ENCODE measurements at regions of chr11 and their contacts with region 1.

Region 1: DNA sequence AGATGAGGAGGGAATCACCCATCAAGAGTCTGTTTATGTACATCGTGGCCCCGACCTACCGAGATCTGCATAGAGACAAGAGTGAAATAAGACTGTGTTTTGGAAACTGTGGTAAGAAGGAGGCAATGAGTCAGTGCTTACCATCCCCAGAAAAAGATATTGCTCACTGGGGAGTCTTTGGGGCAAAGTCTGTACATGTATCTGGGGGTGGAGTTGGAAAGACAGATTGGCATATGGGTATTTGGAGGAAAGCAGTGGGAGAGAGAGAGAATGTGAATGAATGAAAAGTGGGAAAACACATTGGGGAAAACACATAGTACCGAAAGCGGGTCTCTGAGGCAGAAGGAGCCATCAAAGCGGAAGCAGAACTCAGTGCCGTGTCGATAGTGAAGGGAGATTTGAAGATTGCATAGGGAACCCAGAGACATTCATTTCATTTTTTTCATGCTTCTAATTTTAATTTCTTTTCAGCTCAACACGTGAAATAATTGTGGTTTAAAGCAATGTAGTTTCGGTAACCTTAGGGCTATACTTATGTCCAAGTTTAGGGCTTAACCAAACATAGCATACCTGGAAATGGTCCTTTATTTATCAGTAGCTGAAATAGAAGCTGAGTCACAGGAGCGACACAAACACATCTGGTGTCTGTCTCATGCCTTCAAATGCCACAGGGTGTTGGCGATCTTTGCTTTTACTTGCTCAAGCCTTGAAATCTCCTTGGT is 98.6 kb upstream of the CD44 start:
- DNase-seq: peak; percentile 37 to 92 (median 57)
- ATAC-seq: peak; percentile 79
- H3K4me3 ChIP-seq: peak overlapping the region; percentile 55
- H3K4me3 Mint-ChIP-seq: peak overlapping the region; percentile 81
- H3K27ac ChIP-seq: peak overlapping the region; percentile 84 to 88
- H3K27ac Mint-ChIP-seq: peak overlapping the region; percentile 92
- H3K4me1 ChIP-seq: peaks cover 43% of the 10 kb centered on the region
- H3K4me1 Mint-ChIP-seq: peaks cover 72% of the 10 kb centered on the region
- H3K27me3 ChIP-seq: no peaks in the 10 kb centered on the region
- H3K27me3 Mint-ChIP-seq: no peaks in the 10 kb centered on the region
- CTCF ChIP-seq: no peak

Region 2: DNA sequence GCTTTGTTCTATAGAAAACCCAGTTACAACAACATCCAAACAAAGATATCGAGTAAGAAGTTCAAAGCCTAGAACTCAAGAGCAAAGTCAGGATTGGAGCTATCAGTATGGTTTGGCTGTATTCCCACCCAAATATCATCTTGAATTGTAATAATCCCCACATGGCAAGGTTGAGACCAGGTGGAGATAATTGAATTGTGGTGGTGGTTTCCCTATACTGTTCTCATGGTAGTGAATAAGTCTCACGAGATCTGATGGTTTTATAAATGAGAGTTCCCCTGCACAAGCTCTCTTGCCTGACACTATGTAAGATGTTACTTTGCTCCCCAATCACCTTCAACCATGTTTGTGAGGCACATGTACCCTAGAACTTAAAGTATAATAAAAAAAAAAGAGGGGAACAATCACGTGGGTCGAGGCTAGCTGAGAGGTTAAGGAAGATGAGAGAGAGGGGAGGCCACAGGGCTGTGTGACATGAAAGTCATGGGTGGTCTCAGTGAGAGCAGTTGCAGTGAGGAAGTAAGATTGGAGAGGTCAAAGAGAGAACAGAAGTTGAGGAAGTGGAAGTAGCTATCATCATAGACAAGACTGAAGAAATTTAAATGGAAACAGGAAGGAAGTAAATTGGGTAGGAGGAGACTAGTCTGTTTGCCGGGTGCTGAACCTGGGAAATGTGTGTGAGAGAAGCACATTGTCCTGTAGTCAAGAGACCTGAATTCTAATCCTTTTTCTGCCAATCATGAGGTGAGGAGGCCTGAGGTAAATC is 18.5 kb after region 1 on chr11:
- CTCF ChIA-PET with region 1: no interaction called
- POLR2A ChIA-PET with region 1: interaction called, 12 read pairs
- intact Hi-C with region 1: no loop called
- DNase-seq: peak in 1 of 14 experiments; percentile 47
- ATAC-seq: peak; percentile 39
- H3K4me3 ChIP-seq: no peak overlapping the region
- H3K4me3 Mint-ChIP-seq: no peak overlapping the region
- H3K27ac ChIP-seq: peak overlapping the region in 1 of 2 donors; percentile 17
- H3K27ac Mint-ChIP-seq: peak overlapping the region; percentile 76
- H3K4me1 ChIP-seq: peaks cover 26% of the 10 kb centered on the region
- H3K4me1 Mint-ChIP-seq: peaks cover 53% of the 10 kb centered on the region
- H3K27me3 ChIP-seq: no peaks in the 10 kb centered on the region
- H3K27me3 Mint-ChIP-seq: no peaks in the 10 kb centered on the region
- CTCF ChIP-seq: no peak

Region 3: DNA sequence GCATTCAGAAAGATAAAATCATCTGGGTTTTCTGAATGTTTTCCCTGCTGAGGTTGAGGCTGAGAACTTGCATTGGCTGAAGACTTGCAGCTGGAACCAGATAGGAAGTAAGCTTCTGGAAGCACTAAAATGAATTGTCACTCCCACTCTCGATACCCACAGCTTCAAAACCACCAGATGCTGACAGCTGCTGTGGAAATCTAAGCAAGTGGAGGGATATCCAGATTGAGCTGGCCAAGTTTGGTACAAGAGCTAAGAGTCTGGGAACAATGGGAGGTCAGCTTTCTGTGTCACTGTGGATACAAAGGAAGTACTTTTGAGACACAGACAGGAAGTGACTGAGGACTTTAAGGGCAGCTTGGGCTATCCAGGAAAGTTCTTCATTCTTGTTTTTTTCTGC is 47.3 kb after region 1 on chr11:
- CTCF ChIA-PET with region 1: no interaction called
- POLR2A ChIA-PET with region 1: interaction called, 5 read pairs
- intact Hi-C with region 1: loop called (anchors 1 to 5 kb)
- DNase-seq: peak in 3 of 14 experiments; percentile 27 to 53 (median 50)
- ATAC-seq: no peak
- H3K4me3 ChIP-seq: no peak overlapping the region
- H3K4me3 Mint-ChIP-seq: no peak overlapping the region
- H3K27ac ChIP-seq: no peak overlapping the region
- H3K27ac Mint-ChIP-seq: peak overlapping the region; percentile 69
- H3K4me1 ChIP-seq: peaks cover 60% of the 10 kb centered on the region
- H3K4me1 Mint-ChIP-seq: peaks cover 91% of the 10 kb centered on the region
- H3K27me3 ChIP-seq: no peaks in the 10 kb centered on the region
- H3K27me3 Mint-ChIP-seq: no peaks in the 10 kb centered on the region
- CTCF ChIP-seq: no peak

Measured in CD4-positive, alpha-beta T cell (primary cell).